Activated CD4-positive, alpha-beta T cell treated with anti-CD3 and anti-CD28 coated beads, Interleukin-2, amount 10 ng/mL, durations not matched to agents 24 days and 14 days (primary cell): ENCODE measurements at regions of chr17 and their contacts with region 1.

Region 1: GRCh38 chr17:40113110-40113906 is 8.5 kb upstream of the MSL1 start:
- DNase-seq: peak; percentile 98
- H3K4me3 Mint-ChIP-seq: peak overlapping the region; percentile 86
- H3K27ac Mint-ChIP-seq: peak overlapping the region; percentile 94
- H3K4me1 Mint-ChIP-seq: peaks cover 49% of the 10 kb centered on the region
- H3K27me3 Mint-ChIP-seq: no peaks in the 10 kb centered on the region

Region 2: DNA sequence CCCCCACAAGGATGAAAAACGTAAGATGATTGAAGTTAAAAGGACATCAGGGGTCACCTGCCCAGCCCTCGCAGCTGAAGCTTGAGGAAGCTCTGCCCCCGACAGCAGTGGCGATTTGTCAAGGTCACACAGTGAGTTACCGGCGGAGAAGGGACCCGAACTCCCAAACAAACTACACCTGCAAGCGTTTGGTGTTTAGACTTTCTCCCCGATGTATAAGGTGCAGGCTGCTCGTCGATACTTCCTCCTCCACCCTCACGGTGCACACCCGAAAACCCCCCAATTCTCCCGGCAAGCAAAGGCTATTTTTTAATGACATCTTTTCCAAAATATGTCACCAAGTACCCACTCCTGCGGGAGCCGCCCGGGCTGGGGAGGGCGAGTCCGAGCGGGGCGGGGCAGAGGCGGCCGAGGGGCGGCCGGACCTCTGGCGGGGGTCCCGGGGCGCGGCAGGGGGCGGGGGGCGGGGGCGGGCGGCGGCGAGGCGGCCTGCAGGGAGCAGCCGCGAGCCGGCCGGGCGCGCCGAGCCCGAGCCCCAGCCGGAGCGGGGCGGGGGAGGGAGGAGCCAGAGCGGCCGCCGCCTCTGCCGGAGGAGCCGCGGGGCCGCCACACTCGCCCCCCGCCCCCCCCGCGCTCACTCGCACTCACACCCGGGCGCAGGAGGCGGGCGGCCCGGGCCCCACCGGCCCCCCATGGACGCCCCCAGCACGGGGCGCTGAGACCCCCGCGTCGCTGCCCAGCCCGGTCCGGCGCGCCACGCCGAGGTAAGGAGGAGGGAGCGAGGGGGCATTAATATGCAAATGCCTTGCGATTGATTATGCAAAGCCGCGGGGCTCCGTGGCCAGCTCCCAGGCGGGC is 50.8 kb before region 1 on chr17 and contains the start of gene THRA:
- intact Hi-C with region 1: loop called (anchors 2 kb)
- DNase-seq: peak; percentile 91
- H3K4me3 Mint-ChIP-seq: peak within 1 kb of the TSS; percentile 82
- H3K27ac Mint-ChIP-seq: peak within 1 kb of the TSS; percentile 6
- H3K4me1 Mint-ChIP-seq: peaks cover 27% of the 10 kb centered on the region
- H3K27me3 Mint-ChIP-seq: peaks cover 45% of the 10 kb centered on the region
- total RNA-seq, gene THRA: 4.5 and 5.1 TPM in 2 replicates

Region 3: DNA sequence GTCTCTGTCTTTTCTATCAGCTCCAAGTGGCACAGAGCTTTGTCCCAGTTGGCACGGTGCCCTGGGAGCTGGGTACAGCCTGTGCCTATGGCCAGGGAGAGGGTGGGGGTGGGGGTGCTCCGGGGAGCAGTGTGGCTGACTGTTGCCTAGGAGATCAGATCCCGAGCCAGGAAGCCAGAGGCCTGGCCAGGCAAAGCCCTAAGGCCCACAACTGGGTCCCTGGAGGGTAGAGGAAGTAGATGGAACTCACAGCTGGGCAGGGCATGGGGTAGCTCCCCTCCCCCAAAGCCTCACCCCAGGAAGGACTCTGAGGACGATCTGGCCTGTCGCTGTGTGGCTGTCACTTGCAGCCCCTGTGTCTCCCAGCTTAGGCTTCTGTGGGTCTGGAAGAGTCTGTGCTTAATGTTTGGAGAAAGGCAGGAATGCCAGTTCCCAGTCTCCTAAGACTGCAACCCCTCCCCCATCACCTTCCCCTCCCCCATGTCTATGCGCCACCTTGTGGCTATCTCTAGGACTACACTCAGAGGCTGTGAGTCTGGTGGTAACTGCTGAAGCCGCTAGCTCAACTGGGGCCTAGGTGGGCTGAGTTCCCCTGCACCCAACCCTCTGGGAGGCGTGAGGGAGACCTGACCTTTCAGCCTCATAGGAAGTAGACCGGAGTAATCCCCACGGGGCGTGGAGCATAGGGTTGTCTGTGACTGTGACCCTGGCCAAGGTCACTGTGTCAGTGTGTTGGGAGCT is 37.9 kb before region 1 on chr17:
- intact Hi-C with region 1: no loop called
- DNase-seq: peak; percentile 90
- H3K4me3 Mint-ChIP-seq: no peak overlapping the region
- H3K27ac Mint-ChIP-seq: no peak overlapping the region
- H3K4me1 Mint-ChIP-seq: peaks cover 9% of the 10 kb centered on the region
- H3K27me3 Mint-ChIP-seq: no peaks in the 10 kb centered on the region

Region 4: GRCh38 chr17:40139566-40140058 is 26.3 kb after region 1 on chr17:
- intact Hi-C with region 1: loop called (anchors 1 kb)
- DNase-seq: no peak
- H3K4me3 Mint-ChIP-seq: peak overlapping the region; percentile 97
- H3K27ac Mint-ChIP-seq: peak overlapping the region; percentile 99
- H3K4me1 Mint-ChIP-seq: peaks cover 30% of the 10 kb centered on the region
- H3K27me3 Mint-ChIP-seq: no peaks in the 10 kb centered on the region

Region 5: DNA sequence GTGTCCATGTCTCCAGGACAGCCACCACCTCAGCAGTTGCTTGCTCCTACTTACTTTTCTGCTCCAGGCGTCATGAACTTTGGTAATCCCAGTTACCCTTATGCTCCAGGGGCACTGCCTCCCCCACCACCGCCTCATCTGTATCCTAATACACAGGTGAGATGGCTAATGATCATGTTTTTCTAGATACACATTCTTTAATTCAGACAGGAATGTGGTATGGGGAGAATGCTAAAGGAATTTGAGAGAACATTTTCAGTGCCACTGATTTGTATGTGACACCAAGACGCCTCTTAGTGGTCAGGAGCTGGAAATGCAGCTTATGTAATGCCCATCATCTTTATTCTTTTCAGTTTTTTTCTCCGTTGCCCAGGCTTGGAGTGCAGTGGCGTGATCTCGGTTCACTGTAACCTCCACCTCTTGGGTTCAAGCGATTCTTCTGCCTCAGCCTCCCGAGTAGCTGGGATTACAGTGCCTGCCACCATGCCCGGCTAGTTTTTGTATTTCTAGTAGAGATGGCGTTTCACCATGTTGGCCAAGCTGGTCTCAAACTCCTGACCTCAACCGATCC is 55.0 kb after region 1 on chr17:
- intact Hi-C with region 1: loop called (anchors 1 kb)
- DNase-seq: peak; percentile 79
- H3K4me3 Mint-ChIP-seq: no peak overlapping the region
- H3K27ac Mint-ChIP-seq: peak overlapping the region; percentile 51
- H3K4me1 Mint-ChIP-seq: peaks cover 7% of the 10 kb centered on the region
- H3K27me3 Mint-ChIP-seq: no peaks in the 10 kb centered on the region

Region 6: DNA sequence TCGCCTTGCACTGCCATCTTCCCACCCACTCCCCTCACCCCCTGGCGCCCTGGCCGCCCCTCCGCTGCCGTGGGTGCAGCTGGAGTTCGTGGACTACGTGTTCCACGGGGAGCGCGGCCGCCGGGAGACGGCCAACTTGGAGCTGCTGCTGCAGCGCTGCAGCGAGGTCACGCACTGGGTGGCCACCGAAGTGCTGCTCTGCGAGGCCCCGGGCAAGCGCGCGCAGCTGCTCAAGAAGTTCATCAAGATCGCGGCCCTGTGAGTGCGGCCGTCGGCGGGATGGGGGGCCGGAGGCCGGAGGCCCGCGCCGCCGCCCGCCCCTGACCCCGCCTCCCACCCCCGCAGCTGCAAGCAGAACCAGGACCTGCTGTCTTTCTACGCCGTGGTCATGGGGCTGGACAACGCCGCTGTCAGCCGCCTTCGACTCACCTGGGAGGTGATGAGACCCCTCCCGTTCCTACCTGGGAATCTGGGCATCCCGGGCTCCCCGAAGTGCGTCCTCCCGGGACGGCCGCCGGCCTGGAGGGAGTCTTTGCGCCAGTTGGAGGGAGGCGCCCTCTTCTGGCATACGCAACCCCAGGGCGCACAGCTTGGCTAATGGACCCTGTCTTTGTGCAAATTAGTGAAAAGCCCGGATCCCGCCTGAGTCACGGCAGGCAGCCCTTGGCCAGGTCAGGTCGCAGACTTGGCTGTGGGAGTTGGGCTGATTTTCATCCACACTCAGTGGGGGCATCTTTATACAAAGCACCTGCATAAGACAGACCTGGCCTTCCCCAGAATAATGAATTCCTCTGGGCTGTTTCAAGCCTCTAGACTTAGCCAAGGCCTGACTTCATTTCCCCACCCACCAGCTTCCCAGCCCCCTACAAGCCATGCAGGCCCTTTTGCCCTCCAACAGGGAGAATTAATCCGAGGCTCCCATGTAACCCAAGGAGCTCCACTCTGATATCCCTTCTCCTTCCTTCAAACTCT is 78.2 kb after region 1 on chr17:
- intact Hi-C with region 1: loop called (anchors 1 kb)
- DNase-seq: peak; percentile 91
- H3K4me3 Mint-ChIP-seq: peak overlapping the region; percentile 85
- H3K27ac Mint-ChIP-seq: peak overlapping the region; percentile 76
- H3K4me1 Mint-ChIP-seq: peaks cover 11% of the 10 kb centered on the region
- H3K27me3 Mint-ChIP-seq: peaks cover 6% of the 10 kb centered on the region

Region 7: GRCh38 chr17:40287494-40288369 is 174.4 kb after region 1 on chr17 and contains the start of gene CDC6:
- intact Hi-C with region 1: loop called (anchors 2 kb)
- DNase-seq: peak; percentile 99
- H3K4me3 Mint-ChIP-seq: peak within 1 kb of the TSS; percentile 98
- H3K27ac Mint-ChIP-seq: peak within 1 kb of the TSS; percentile 99
- H3K4me1 Mint-ChIP-seq: peaks cover 44% of the 10 kb centered on the region
- H3K27me3 Mint-ChIP-seq: no peaks in the 10 kb centered on the region
- total RNA-seq, gene CDC6: 139 and 142 TPM in 2 replicates